AG04449 (cell line): ENCODE measurements at regions of chr20 and their contacts with region 1.

Region 1: GRCh38 chr20:34190679-34191090 is 50.5 kb upstream of the ASIP start:
- DNase-seq: peak; percentile 57
- H3K4me3 ChIP-seq: no peak overlapping the region
- CTCF ChIP-seq: peak; percentile 96

Region 2: DNA sequence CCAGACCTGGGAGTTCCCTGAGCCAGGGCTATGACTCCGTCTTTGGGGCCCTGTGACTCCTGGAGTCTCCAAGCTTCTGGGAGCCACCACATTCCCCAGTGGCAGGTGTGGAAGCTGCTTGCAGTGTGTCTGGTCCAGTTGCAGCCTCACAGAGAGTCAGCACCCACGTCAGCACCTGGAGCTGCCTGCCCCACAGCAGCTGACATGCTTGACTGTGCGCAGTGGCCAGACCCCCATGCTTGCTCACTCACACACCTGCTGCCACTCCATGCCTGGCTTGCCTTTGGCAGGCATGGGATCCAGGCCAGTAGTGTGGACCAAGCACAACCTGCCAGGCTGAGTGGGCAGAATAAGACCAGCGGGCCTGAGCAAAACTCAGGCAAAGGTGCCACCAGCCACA is 19.6 kb after region 1 on chr20:
- CTCF ChIA-PET with region 1: interaction called, 18 read pairs
- POLR2A ChIA-PET with region 1: no interaction called
- DNase-seq: no peak
- H3K4me3 ChIP-seq: no peak overlapping the region
- CTCF ChIP-seq: no peak

Region 3: DNA sequence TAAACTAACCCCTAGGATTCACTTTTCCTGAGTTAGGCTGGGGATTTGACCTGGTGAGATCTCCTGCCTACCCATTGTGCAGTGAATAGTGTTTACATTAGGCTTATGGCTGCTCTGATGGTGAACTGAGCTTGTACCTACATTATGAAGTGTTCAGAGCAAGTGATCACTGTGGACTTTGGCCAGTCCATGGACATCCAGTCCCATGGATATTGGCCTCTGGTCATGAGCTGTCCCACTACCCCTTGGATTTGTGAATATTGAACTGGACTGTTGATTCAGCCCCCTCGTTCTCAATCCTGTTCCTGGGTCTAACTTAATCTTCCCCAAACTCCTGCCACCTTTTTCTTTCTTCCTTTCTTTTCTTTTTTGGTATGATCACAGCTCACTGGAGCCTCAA is 64.3 kb after region 1 on chr20:
- CTCF ChIA-PET with region 1: interaction called, 14 read pairs
- POLR2A ChIA-PET with region 1: no interaction called
- DNase-seq: no peak
- H3K4me3 ChIP-seq: no peak overlapping the region
- CTCF ChIP-seq: no peak

Region 4: GRCh38 chr20:34302723-34303528 is 112.2 kb after region 1 on chr20 and contains the start of gene AHCY:
- CTCF ChIA-PET with region 1: interaction called, 94 read pairs
- POLR2A ChIA-PET with region 1: no interaction called
- DNase-seq: peak; percentile 60
- H3K4me3 ChIP-seq: peak within 1 kb of the TSS; percentile 78
- CTCF ChIP-seq: no peak

Region 5: DNA sequence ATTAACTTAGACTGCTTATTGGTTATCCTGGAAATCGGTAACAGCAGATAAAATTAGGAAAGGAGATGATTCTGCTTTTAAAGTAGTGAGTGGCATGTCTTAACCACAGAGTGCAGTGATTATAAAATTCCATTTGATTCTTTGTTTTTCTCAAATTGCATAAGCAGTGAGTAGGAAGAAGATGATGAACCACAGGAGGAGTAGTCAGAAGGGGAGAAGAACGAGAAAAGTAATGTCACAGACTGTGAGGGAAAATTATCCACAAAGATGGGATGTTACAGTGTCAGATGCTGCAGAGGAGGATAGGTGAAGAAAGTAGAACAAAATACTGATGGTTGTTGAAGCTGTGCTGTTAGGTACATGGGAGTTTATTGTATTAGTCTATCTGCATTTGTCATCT is 235.3 kb after region 1 on chr20:
- CTCF ChIA-PET with region 1: no interaction called
- POLR2A ChIA-PET with region 1: no interaction called
- DNase-seq: no peak
- H3K4me3 ChIP-seq: no peak overlapping the region
- CTCF ChIP-seq: no peak